T-cell (primary cell): ENCODE measurements at regions of chrX and their contacts with region 1.

Region 1: DNA sequence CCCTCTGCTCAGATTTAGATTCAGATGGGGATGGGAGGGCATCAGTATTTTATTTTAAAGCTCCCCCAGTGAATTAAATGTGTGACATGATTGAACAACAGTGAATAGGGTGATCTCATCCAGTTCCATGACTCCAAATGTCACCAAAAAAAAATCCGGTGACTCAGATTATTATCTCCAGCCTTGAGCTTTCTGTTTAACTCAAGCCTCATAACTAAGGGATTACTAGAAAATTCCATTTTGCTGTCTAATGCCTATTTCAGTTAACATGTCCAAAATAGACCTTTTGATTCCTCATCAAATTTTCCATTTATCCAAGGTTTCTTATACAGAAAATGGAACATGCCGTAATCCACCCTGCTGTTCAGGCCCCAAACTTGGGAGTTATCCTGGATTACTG is 121.9 kb upstream of the TMEM47 start:
- DNase-seq: no peak
- ATAC-seq: no peak
- H3K4me3 ChIP-seq: no peak overlapping the region
- H3K4me3 Mint-ChIP-seq: no peak overlapping the region
- H3K27ac ChIP-seq: no peak overlapping the region
- H3K27ac Mint-ChIP-seq: no peak overlapping the region
- H3K4me1 ChIP-seq: no peaks in the 10 kb centered on the region
- H3K4me1 Mint-ChIP-seq: no peaks in the 10 kb centered on the region
- H3K27me3 ChIP-seq: no peaks in the 10 kb centered on the region
- H3K27me3 Mint-ChIP-seq: no peaks in the 10 kb centered on the region

Region 2: DNA sequence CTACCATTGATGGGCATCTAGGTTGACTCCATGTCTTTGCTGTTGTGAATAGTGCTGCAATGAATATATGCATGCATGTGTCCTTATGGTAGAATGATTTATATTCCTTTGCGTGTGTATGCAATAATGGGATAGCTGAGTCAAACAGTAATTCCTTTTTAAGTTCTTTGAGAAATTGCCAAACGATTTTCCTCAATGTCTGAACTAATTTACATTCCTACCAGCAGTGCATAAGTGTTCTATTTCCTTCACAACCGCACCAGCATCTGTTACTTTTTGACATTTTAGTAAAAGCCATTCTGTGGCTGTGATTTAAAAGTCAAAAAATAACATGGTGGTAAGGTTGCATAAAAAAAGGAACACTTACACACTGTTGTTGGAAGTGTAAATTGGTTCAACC is 60.5 kb after region 1 on chrX:
- CTCF ChIA-PET with region 1: no interaction called
- POLR2A ChIA-PET with region 1: no interaction called
- DNase-seq: no peak
- ATAC-seq: no peak
- H3K4me3 ChIP-seq: no peak overlapping the region
- H3K4me3 Mint-ChIP-seq: no peak overlapping the region
- H3K27ac ChIP-seq: no peak overlapping the region
- H3K27ac Mint-ChIP-seq: no peak overlapping the region
- H3K4me1 ChIP-seq: no peaks in the 10 kb centered on the region
- H3K4me1 Mint-ChIP-seq: no peaks in the 10 kb centered on the region
- H3K27me3 ChIP-seq: no peaks in the 10 kb centered on the region
- H3K27me3 Mint-ChIP-seq: no peaks in the 10 kb centered on the region

Region 3: GRCh38 chrX:36581030-36581429 is 1802.1 kb after region 1 on chrX:
- CTCF ChIA-PET with region 1: no interaction called
- POLR2A ChIA-PET with region 1: interaction called in 1 of 2 experiments, 12 read pairs
- DNase-seq: no peak
- ATAC-seq: no peak
- H3K4me3 ChIP-seq: no peak overlapping the region
- H3K4me3 Mint-ChIP-seq: no peak overlapping the region
- H3K27ac ChIP-seq: no peak overlapping the region
- H3K27ac Mint-ChIP-seq: no peak overlapping the region
- H3K4me1 ChIP-seq: no peaks in the 10 kb centered on the region
- H3K4me1 Mint-ChIP-seq: no peaks in the 10 kb centered on the region
- H3K27me3 ChIP-seq: no peaks in the 10 kb centered on the region
- H3K27me3 Mint-ChIP-seq: peaks cover 0 to 7% of the 10 kb centered on the region in 2 donors